Lower leg skin (tissue), 4 donors: ENCODE measurements at regions of chrX and their contacts with region 1.

Region 1: GRCh38 chrX:119981286-119982070 is 37.9 kb upstream of the NKAP start:
- DNase-seq: no peak
- H3K4me3 ChIP-seq: no peak overlapping the region
- CTCF ChIP-seq: no peak
- POLR2A ChIP-seq: no peak

Region 2: DNA sequence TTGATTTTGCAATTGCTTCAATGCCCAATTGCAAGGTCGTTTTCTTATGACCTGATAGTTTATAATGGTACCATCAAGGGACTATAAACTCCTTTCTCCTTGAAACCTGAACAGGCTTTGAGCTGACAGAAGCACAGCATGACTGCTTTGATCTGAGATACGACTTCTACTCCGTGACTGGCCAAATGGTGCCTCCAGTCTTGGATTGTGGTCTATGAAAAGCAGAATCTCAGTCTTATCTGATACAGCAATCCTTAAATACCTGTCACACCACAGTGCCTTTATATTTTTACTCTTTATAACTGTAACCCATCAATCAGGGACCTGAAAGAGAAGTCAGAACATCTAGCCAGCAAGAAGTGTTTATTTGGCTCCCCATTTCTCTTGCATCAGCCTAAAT is 1392.8 kb before region 1 on chrX:
- intact Hi-C with region 1: loop called (anchors 10 kb)
- DNase-seq: no peak
- H3K4me3 ChIP-seq: no peak overlapping the region
- CTCF ChIP-seq: no peak
- POLR2A ChIP-seq: no peak

Region 3: DNA sequence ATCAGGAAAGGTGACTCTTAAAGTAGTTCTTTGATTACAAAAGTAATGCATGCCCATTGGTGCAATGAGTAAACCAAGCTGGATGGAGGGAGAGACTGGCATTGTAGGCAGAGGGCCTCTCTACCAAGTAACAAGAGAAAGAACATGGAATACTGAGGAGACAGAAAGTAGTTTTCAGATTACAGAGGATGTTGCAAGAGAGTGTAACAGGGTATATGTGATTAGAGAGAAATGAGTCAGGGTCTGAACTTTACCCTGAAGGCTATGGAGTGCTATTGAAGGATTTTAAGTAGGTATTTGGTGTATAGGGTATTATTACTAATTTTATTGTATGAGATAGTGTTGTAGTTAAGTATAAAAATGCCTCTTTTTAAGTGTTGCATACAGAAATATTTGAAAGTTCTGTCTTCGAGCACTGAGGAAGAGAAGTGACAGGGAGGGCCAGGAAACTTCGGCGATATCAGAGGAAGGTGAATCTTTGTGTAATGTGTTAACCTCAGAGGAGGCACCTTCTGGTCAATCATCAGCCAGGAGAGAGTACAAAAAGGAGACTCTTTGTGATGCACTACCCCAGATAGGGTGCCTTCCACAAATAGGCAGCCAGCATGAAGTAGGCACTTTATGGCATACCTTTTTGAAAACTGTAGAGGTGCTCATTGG is 46.1 kb before region 1 on chrX:
- intact Hi-C with region 1: no loop called
- DNase-seq: no peak
- H3K4me3 ChIP-seq: no peak overlapping the region
- CTCF ChIP-seq: no peak
- POLR2A ChIP-seq: no peak